Sigmoid colon (tissue), 7 donors: ENCODE measurements at regions of chr10 and their contacts with region 1.

Region 1: DNA sequence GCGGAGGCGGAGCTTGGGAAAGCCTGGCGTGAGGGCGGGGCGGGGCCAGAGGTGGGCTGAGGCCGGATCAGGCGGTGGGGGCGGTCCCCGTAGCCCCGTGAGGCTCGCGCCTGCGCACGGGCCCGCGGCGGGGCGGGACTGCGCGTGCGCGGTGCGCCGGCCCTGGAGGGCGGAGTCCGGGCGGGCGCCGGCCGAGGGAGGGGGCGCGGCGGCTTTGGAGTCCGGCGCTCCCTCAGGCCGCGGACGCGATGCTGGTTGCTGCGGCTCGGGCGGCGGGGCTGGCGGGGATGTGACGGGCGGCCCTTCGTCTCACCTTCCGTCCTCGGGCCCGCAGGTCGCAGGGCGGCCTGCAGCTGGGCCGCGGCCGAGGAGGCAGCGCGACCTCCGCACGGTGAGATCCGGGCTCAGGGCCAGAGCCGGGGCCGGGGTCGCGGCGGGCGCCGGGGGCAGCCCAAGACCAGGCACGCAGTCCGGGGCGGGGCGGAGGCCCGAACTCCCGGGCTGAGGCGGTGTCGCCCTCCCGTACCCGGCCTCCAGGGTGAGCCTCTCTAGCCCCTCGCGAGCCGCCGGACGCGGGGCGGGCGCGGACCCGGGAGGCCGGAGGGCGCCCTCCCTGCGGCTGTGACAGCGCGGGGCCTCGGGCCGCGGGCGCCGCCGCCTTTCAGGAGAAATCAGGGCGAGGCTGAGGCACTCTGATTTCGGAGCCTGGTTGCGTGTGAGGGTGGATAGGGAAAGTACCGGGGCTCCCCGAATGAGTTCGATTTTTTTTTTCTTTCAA is at the start of gene CCSER2:
- DNase-seq: peak; percentile 99
- H3K4me3 ChIP-seq: peak within 1 kb of the TSS; percentile 60 to 100 (median 76)
- H3K27ac ChIP-seq: peak within 1 kb of the TSS; percentile 91 to 100 (median 96)
- H3K4me1 ChIP-seq: peaks cover 0 to 36% (median 15%) of the 10 kb centered on the region in 4 donors
- H3K27me3 ChIP-seq: no peaks in the 10 kb centered on the region
- CTCF ChIP-seq: no peak
- EP300 ChIP-seq: no peak
- POLR2A ChIP-seq: peak in 1 of 2 donors; percentile 28
- total RNA-seq, gene CCSER2: 83.2 to 101 (median 91.2) TPM

Region 2: DNA sequence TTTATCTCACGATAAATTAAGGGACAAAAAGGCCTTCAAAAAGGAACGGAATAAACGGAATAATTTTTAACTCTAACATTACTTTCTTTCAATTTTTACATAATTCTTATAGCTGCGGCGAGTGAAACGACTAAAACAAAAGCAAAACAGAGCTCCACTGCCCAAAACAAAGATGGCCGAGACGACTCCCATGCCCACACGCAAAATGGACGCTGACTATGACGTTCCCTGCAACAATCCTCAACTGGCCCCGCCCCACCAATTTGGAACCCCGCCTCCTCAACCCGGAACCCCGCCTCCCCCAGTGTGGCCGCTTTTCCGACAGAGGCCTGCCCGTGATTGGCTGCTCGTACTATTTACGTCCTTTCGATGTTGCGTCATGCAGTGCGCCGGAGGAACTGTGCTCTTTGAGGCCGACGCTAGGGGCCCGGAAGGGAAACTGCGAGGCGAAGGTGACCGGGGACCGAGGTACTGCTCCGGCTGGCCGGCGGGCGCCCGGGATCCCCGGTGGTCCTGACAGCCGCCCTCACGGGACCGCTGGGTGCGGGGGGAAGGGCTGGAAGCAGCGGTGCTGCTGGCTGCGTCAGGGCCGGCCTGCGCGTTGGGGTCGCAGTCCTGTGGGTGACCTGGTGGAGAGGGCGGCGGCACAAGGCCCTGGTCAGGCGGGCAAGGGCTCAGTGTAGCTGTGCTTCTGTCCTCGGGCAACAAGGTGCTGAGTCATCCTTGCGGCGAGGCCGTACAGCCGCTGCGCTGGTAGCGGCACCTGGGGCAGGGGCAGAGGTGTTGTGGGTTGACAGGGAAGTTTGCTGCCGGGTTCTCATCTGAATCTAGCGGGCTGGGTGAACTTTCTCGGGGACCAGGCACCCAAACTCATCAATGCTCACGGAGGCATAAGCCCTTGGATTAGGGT is 189.2 kb before region 1 on chr10 and contains the start of gene GHITM:
- intact Hi-C with region 1: loop called (anchors 5 kb)
- DNase-seq: peak; percentile 99
- H3K4me3 ChIP-seq: peak within 1 kb of the TSS; percentile 95 to 99 (median 97)
- H3K27ac ChIP-seq: peak within 1 kb of the TSS; percentile 95 to 98 (median 97)
- H3K4me1 ChIP-seq: peaks cover 0 to 21% (median 16%) of the 10 kb centered on the region in 4 donors
- H3K27me3 ChIP-seq: no peaks in the 10 kb centered on the region
- CTCF ChIP-seq: peak; percentile 41 to 62 (median 56)
- EP300 ChIP-seq: peak in 1 of 4 donors; percentile 74
- POLR2A ChIP-seq: peak; percentile 88 to 90
- total RNA-seq, gene GHITM: 140 to 212 (median 186) TPM

Region 3: GRCh38 chr10:84429926-84430520 is 101.4 kb after region 1 on chr10:
- intact Hi-C with region 1: loop called (anchors 2 kb)
- DNase-seq: no peak
- H3K4me3 ChIP-seq: no peak overlapping the region
- H3K27ac ChIP-seq: no peak overlapping the region
- H3K4me1 ChIP-seq: peaks cover 0 to 54% (median 27%) of the 10 kb centered on the region in 4 donors
- H3K27me3 ChIP-seq: no peaks in the 10 kb centered on the region
- CTCF ChIP-seq: peak in 2 of 4 experiments; percentile 38 to 65
- EP300 ChIP-seq: no peak
- POLR2A ChIP-seq: no peak